ENCODE measurements at regions of chr5 and their contacts with region 1.

Region 1: DNA sequence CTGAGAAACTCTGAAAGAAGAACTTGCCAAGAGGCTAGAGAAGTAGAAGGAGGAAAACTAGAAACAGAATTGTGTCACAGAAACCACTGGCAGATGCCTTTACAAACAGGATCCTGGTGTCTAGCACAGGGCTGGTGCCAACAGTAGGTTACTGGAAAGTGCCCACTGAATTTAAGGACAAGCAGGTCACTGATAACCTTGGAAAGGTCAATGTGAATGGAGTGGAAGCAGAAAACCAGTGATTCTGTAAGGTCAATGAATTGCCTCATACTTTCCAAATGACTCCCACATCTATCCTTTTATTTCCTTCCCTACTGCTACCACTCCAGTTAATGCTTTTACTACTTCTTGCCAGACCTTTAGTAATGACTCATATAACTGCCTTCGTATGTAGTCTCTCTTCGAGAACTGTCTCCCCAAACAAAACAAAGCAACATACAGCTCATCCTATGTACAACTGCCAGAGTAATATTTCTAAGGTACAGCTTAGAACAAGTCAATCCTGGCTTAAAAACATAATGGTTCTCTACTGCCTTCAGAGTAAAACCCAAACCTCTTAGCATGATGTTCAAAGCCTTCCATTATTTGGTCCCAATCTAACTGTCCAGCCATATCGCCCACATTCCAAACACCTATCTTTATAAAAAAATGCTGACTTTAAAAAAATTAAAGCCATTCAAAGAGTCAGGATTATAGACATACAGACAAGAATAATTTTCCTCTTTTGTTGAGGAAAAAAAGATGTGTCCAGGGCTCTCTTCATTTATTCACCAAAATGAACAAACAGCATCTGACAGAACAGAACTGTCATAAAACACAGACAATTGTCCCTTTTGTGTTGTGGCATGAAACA is 52.5 kb downstream of the NR3C1 start:
- DNase-seq: no peak
- H3K4me3 Mint-ChIP-seq: no peak overlapping the region
- H3K27ac Mint-ChIP-seq: no peak overlapping the region
- H3K4me1 Mint-ChIP-seq: peaks cover 21% of the 10 kb centered on the region
- H3K27me3 Mint-ChIP-seq: no peaks in the 10 kb centered on the region

Region 2: DNA sequence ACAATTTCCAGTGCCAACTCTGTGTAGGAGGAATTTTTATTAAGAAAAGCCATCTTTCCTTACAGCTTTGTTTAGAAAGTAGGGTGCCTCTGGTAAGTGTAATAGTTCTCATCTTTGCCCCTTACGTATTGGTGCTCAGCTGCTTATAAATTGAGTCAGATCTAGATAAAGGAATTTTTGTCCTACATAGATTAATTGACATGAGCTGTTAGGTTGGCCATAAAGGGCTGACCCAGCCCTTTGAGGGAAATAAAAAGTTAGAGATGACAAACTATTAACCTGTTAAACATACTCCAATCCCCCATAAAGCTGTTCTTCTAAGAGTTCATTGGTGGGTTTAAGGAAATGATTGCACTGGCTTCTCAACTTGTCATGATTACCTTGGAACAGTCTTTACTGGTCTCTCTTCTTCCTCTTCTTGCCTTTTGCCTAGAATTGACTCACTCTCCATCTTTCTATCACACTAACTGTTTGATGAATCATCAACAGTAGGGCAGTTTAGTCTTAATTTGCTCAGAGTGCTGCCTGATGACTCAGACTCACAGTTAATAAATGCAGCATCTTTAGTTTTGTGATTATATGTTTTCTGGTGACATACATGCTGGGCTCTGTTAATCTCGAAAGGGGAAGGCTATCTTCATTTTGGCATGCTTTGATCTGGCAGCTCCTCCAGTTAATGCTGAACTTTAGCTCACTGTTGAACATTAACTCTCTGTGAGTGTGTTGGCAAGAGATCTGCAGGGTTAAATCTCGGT is 529.1 kb before region 1 on chr5:
- intact Hi-C with region 1: loop called (anchors 5 kb)
- DNase-seq: no peak
- H3K4me3 Mint-ChIP-seq: no peak overlapping the region
- H3K27ac Mint-ChIP-seq: peak overlapping the region; percentile 16
- H3K4me1 Mint-ChIP-seq: peaks cover 79% of the 10 kb centered on the region
- H3K27me3 Mint-ChIP-seq: no peaks in the 10 kb centered on the region

Region 3: GRCh38 chr5:143057580-143057999 is 293.4 kb before region 1 on chr5:
- intact Hi-C with region 1: loop called (anchors 1 kb)
- DNase-seq: no peak
- H3K4me3 Mint-ChIP-seq: no peak overlapping the region
- H3K27ac Mint-ChIP-seq: peak overlapping the region; percentile 97
- H3K4me1 Mint-ChIP-seq: peaks cover 77% of the 10 kb centered on the region
- H3K27me3 Mint-ChIP-seq: no peaks in the 10 kb centered on the region

Region 4: GRCh38 chr5:143188692-143189091 is 162.3 kb before region 1 on chr5:
- intact Hi-C with region 1: loop called (anchors 1 kb)
- DNase-seq: no peak
- H3K4me3 Mint-ChIP-seq: peak overlapping the region; percentile 34
- H3K27ac Mint-ChIP-seq: peak overlapping the region; percentile 71
- H3K4me1 Mint-ChIP-seq: peaks cover 54% of the 10 kb centered on the region
- H3K27me3 Mint-ChIP-seq: no peaks in the 10 kb centered on the region

Region 5: DNA sequence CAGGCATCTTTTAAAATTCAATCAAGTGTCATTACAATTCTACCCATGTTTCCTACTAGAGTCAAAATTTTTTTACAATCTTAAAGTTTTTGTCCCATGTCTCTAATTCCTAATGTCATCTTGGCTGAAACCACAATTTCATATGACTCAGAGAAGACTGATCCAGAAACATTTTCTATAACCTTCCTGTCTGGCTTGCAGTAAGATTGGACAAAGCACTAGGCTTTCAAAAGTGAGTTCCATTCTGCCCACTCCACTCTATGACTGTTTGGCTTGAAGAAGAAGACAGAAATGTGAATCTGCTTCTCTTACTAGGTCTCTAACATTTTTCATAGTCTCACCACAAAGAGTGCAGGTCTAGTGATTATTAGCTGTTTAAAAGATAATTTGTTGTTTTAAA is 36.3 kb before region 1 on chr5:
- intact Hi-C with region 1: loop called (anchors 2 kb)
- DNase-seq: no peak
- H3K4me3 Mint-ChIP-seq: no peak overlapping the region
- H3K27ac Mint-ChIP-seq: peak overlapping the region; percentile 29
- H3K4me1 Mint-ChIP-seq: peaks cover 41% of the 10 kb centered on the region
- H3K27me3 Mint-ChIP-seq: no peaks in the 10 kb centered on the region

Region 6: GRCh38 chr5:143605403-143606005 is 254.5 kb after region 1 on chr5:
- intact Hi-C with region 1: loop called (anchors 5 kb)
- DNase-seq: peak; percentile 25
- H3K4me3 Mint-ChIP-seq: peak overlapping the region; percentile 56
- H3K27ac Mint-ChIP-seq: peak overlapping the region; percentile 91
- H3K4me1 Mint-ChIP-seq: peaks cover 38% of the 10 kb centered on the region
- H3K27me3 Mint-ChIP-seq: no peaks in the 10 kb centered on the region